Activated B cell treated with CpG ODN at 0.5 μM for 24 hours (primary cell): ENCODE measurements at regions of chr19 and their contacts with region 1.

Region 1: GRCh38 chr19:43754503-43755255 is at the start of gene SMG9:
- DNase-seq: peak; percentile 97
- ATAC-seq: peak; percentile 74
- H3K4me3 Mint-ChIP-seq: peak within 1 kb of the TSS; percentile 90
- H3K27ac Mint-ChIP-seq: peak within 1 kb of the TSS; percentile 98
- H3K4me1 Mint-ChIP-seq: peaks cover 81% of the 10 kb centered on the region
- H3K27me3 Mint-ChIP-seq: no peaks in the 10 kb centered on the region
- CTCF ChIP-seq: no peak
- total RNA-seq, gene SMG9: 91.2 and 105 TPM in 2 replicates

Region 2: GRCh38 chr19:43532962-43533545 is 221.6 kb before region 1 on chr19 and contains the start of gene ZNF575:
- CTCF ChIA-PET with region 1: no interaction called
- POLR2A ChIA-PET with region 1: interaction called, 10 read pairs
- intact Hi-C with region 1: no loop called
- DNase-seq: peak; percentile 77
- ATAC-seq: peak; percentile 45
- H3K4me3 Mint-ChIP-seq: peak within 1 kb of the TSS; percentile 97
- H3K27ac Mint-ChIP-seq: peak within 1 kb of the TSS; percentile 98
- H3K4me1 Mint-ChIP-seq: peaks cover 19% of the 10 kb centered on the region
- H3K27me3 Mint-ChIP-seq: no peaks in the 10 kb centered on the region
- CTCF ChIP-seq: no peak
- total RNA-seq, gene ZNF575: 1.9 and 3.4 TPM in 2 replicates

Region 3: GRCh38 chr19:43700395-43701000 is 54.2 kb before region 1 on chr19:
- CTCF ChIA-PET with region 1: no interaction called
- POLR2A ChIA-PET with region 1: no interaction called
- intact Hi-C with region 1: loop called (anchors 2 kb)
- DNase-seq: peak; percentile 21
- ATAC-seq: peak; percentile 30
- H3K4me3 Mint-ChIP-seq: peak overlapping the region; percentile 85
- H3K27ac Mint-ChIP-seq: peak overlapping the region; percentile 90
- H3K4me1 Mint-ChIP-seq: peaks cover 30% of the 10 kb centered on the region
- H3K27me3 Mint-ChIP-seq: peaks cover 9% of the 10 kb centered on the region
- CTCF ChIP-seq: no peak

Region 4: DNA sequence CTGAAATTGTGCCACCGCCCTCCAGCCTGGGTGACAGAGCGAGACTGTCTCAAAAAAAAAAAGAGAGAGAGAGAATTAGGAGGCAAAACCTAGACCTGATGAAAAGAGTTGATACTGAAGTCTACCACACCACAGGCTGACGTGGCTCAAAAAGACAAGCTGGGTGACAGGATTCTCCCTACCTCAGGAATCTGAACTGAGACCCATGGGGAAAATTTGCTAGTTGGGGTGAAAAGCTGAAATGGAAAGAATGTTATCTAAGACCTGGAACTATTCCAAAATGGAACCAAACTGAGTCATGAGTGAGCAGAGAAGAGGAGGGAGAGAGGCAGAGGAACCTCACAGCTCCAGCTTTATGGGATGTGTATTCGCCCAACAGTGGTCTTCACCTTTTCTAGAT is 11.7 kb before region 1 on chr19:
- CTCF ChIA-PET with region 1: interaction called, 22 read pairs
- POLR2A ChIA-PET with region 1: interaction called, 25 read pairs
- intact Hi-C with region 1: loop called (anchors 1 kb)
- DNase-seq: no peak
- ATAC-seq: no peak
- H3K4me3 Mint-ChIP-seq: no peak overlapping the region
- H3K27ac Mint-ChIP-seq: no peak overlapping the region
- H3K4me1 Mint-ChIP-seq: peaks cover 22% of the 10 kb centered on the region
- H3K27me3 Mint-ChIP-seq: no peaks in the 10 kb centered on the region
- CTCF ChIP-seq: no peak

Region 5: DNA sequence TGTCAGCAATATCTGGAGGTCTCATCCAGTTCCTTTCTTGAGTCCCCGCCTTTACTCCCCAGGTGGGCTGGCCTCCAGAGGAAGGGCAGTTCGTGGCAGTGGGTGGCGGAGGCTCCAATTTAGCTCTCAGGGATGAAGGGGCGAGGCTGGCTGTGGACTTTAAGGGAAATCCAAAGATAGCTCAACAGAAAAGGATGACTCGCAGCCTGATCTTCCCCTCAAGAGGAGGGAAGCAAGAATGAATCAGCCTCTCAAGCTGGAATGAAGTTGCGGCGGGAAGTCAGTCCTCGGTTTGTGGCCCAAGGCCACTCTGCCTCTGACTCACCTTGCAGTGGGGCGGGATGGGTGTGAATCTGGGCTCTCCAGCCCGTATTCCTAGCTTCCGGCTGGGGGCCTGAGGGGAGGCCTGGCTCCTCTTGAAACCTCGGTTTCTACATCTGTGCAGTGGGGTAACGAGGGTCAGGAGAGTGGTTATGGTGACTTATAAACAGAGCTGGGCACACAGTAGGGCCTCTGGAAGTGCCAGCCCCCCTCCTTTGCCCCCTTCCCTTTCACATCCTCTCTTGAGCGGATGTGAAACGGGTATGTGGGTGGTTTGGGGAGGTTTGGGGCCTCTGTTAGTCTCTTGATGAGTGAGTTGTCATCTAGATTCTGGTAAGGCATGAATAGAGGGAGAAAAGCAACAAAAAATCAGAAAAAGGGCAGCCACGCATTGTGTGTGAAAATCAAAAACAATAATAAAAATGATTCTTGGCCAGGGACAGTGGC is 10.6 kb after region 1 on chr19:
- CTCF ChIA-PET with region 1: interaction called, 33 read pairs
- POLR2A ChIA-PET with region 1: interaction called, 355 read pairs
- intact Hi-C with region 1: loop called (anchors 1 kb)
- DNase-seq: peak; percentile 55
- ATAC-seq: peak; percentile 84
- H3K4me3 Mint-ChIP-seq: peak overlapping the region; percentile 76
- H3K27ac Mint-ChIP-seq: peak overlapping the region; percentile 94
- H3K4me1 Mint-ChIP-seq: peaks cover 68% of the 10 kb centered on the region
- H3K27me3 Mint-ChIP-seq: no peaks in the 10 kb centered on the region
- CTCF ChIP-seq: no peak

Region 6: DNA sequence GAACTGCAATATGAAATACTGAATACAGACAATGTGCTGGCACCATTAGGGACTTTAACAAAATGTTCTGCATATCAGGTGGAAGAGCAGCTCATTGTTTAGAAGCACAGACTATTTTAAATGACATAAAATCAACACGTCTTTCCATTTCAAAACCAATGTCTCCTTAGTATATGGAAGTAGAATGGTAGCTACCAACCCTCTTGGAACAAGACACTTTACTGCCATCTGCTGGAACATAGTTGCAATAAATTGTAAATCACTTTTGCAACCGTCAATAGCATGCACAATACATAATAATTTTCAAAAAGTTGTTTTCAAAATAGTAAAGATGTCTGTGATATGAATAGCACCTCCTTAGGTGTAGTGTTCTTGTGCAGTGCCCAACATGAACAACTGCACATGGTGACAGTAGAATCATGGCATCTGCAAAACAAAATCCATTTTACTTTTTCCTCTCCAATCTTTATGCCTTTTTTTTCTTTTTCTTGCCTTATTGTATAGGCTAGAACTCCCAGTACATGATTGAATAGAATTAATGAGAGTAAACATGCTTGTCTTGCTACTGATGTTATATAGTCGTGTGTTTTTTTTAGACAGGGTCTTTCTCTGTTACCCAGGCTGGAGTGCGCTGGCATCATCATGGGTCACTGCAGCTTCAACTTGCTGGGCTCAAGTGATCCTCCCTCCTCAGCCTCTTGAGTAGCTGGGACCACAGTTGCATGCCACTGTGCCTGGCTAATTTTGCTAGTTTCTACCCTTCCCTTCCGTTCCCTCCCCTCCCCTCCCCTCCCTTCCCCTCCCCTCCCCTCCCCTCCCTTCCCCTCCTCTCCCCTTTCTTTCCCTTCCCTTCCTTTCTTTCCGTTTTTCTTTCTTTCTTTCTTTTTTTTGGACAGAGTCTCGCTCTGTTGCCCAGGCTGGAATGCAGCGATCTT is 55.4 kb after region 1 on chr19:
- CTCF ChIA-PET with region 1: interaction called, 3 read pairs
- POLR2A ChIA-PET with region 1: interaction called, 5 read pairs
- intact Hi-C with region 1: loop called (anchors 2 kb)
- DNase-seq: no peak
- ATAC-seq: peak; percentile 49
- H3K4me3 Mint-ChIP-seq: no peak overlapping the region
- H3K27ac Mint-ChIP-seq: no peak overlapping the region
- H3K4me1 Mint-ChIP-seq: no peaks in the 10 kb centered on the region
- H3K27me3 Mint-ChIP-seq: peaks cover 14% of the 10 kb centered on the region
- CTCF ChIP-seq: no peak